Mammary epithelial cell (primary cell): ENCODE measurements at regions of chr7 and their contacts with region 1.

Region 1: GRCh38 chr7:88254716-88255115 is 34.9 kb upstream of the SRI start:
- DNase-seq: peak; percentile 98
- H3K4me3 ChIP-seq: no peak overlapping the region
- H3K27ac ChIP-seq: peak overlapping the region; percentile 82
- H3K4me1 ChIP-seq: peaks cover 31% of the 10 kb centered on the region
- H3K27me3 ChIP-seq: no peaks in the 10 kb centered on the region
- CTCF ChIP-seq: no peak

Region 2: GRCh38 chr7:87961754-87962153 is 293.0 kb before region 1 on chr7:
- CTCF ChIA-PET with region 1: no interaction called
- dilution Hi-C with region 1: no loop called
- in situ Hi-C with region 1: no loop called
- intact Hi-C with region 1: no loop called
- DNase-seq: no peak
- H3K4me3 ChIP-seq: no peak overlapping the region
- H3K27ac ChIP-seq: no peak overlapping the region
- H3K4me1 ChIP-seq: no peaks in the 10 kb centered on the region
- H3K27me3 ChIP-seq: peaks cover 3% of the 10 kb centered on the region
- CTCF ChIP-seq: no peak

Region 3: GRCh38 chr7:88291398-88292173 is 36.9 kb after region 1 on chr7:
- CTCF ChIA-PET with region 1: no interaction called
- dilution Hi-C with region 1: loop called (anchors 5 kb)
- in situ Hi-C with region 1: no loop called
- intact Hi-C with region 1: loop called (anchors 2 kb)
- DNase-seq: peak; percentile 96
- H3K4me3 ChIP-seq: no peak overlapping the region
- H3K27ac ChIP-seq: peak overlapping the region; percentile 93
- H3K4me1 ChIP-seq: peaks cover 39% of the 10 kb centered on the region
- H3K27me3 ChIP-seq: no peaks in the 10 kb centered on the region
- CTCF ChIP-seq: no peak

Region 4: DNA sequence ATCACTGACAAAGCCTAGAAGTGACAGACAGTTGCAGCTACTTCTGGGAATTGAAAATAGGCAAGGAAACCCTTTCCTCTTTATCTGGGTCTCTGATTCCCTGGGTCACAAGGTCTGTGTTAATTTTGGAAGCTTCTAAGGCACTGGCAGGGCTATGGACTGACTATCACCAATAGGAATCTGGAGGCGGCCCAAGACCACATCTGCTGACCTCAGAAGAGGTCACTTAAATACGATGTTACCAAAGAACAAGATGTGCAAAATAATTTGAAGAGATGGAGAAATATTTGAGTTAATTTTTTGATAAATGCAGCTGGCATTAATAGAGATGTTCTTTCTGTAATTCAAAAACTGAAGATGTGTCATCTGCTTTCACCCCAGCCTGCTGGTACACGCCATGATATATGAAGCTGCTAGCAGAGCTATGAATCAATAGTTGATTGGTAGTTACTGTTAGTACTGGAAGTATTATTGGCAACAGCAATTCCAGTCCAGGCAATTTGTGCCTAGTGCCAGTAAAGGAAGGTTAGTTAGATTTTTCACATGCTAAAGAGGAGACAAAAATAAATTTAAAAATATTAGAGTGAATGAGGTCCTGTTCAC is 57.4 kb after region 1 on chr7:
- CTCF ChIA-PET with region 1: no interaction called
- dilution Hi-C with region 1: no loop called
- in situ Hi-C with region 1: no loop called
- intact Hi-C with region 1: loop called (anchors 10 kb)
- DNase-seq: peak; percentile 64
- H3K4me3 ChIP-seq: no peak overlapping the region
- H3K27ac ChIP-seq: peak overlapping the region; percentile 41
- H3K4me1 ChIP-seq: peaks cover 13% of the 10 kb centered on the region
- H3K27me3 ChIP-seq: no peaks in the 10 kb centered on the region
- CTCF ChIP-seq: no peak

Region 5: DNA sequence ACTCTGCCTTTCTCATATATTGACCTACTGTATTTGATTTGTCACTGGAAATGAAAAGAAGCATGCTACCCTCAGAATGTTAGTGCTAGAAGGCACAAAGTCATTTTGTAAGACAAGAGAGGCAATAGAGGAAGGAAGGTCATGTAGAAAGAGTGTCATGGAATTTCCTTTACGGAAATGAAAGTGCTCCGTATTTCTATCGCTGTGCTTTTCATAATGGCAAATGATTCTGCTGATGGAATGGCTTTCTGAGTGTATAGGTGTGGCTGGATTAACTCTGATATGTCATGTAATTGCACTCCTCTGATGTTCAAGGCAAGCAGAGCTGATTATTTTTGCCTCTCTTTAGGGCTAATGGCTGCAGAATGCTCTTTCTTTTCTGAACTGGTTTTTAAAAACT is 67.4 kb after region 1 on chr7:
- CTCF ChIA-PET with region 1: no interaction called
- dilution Hi-C with region 1: loop called (anchors 5 kb)
- in situ Hi-C with region 1: no loop called
- intact Hi-C with region 1: loop called (anchors 10 kb)
- DNase-seq: no peak
- H3K4me3 ChIP-seq: no peak overlapping the region
- H3K27ac ChIP-seq: no peak overlapping the region
- H3K4me1 ChIP-seq: peaks cover 19% of the 10 kb centered on the region
- H3K27me3 ChIP-seq: no peaks in the 10 kb centered on the region
- CTCF ChIP-seq: no peak